HCT116 (cell line): ENCODE measurements at regions of chr3 and their contacts with region 1.

Region 1: GRCh38 chr3:69451594-69451993 is 65.7 kb upstream of the FRMD4B start:
- DNase-seq: no peak
- ATAC-seq: 0 out of 2 replicates have a peak, but pooled peaks have one; percentile 55
- H3K4me3 ChIP-seq: no peak overlapping the region
- H3K27ac ChIP-seq: no peak overlapping the region
- H3K4me1 ChIP-seq: no peaks in the 10 kb centered on the region
- H3K27me3 ChIP-seq: no peaks in the 10 kb centered on the region
- CTCF ChIP-seq: peak in 2 of 3 experiments; percentile 11 to 35; a peak in 3 of 6 replicates
- POLR2A ChIP-seq: no peak
- RAD21 ChIP-seq: peak; percentile 12; the same call in 1 of the 2 replicates

Region 2: GRCh38 chr3:68653381-68653780 is 798.2 kb before region 1 on chr3:
- CTCF ChIA-PET with region 1: no interaction called
- POLR2A ChIA-PET with region 1: no interaction called
- RAD21 ChIA-PET with region 1: no interaction called
- intact Hi-C with region 1: no loop called
- DNase-seq: no peak
- ATAC-seq: no peak
- H3K4me3 ChIP-seq: no peak overlapping the region
- H3K27ac ChIP-seq: no peak overlapping the region
- H3K4me1 ChIP-seq: no peaks in the 10 kb centered on the region
- H3K27me3 ChIP-seq: no peaks in the 10 kb centered on the region
- CTCF ChIP-seq: no peak
- POLR2A ChIP-seq: no peak
- RAD21 ChIP-seq: no peak

Region 3: DNA sequence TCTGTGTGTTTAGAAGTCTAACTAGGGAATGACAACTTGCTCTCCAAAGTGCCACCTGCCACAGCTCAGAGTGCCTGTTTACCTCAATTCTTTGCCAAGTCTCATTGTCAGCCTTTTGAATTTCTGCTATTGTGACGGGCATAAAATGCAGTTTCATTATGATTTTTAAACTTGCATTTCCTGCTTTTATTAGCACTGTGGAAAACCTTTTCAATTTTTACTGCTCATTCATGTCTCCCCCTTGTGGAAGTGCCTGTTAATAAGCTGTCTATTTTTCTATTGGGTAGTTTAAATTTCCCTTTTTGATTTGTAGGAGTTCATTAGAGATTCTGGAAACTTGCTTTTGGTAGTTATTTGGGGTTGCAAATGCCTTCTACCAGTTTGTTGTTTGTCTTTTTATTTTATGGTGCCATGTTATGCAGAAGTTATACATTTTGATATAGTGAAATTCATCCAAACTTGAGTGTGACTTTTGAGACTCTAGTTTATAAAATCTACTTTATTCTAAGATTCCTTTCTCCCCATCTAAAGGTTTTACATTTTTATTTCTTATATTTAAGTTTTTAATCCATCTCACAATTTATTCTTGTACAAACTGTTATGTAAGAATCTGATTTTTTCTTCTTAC is 11.8 kb before region 1 on chr3:
- CTCF ChIA-PET with region 1: interaction called, 10 read pairs
- POLR2A ChIA-PET with region 1: no interaction called
- RAD21 ChIA-PET with region 1: no interaction called
- intact Hi-C with region 1: no loop called
- DNase-seq: peak; percentile 16
- ATAC-seq: no peak
- H3K4me3 ChIP-seq: no peak overlapping the region
- H3K27ac ChIP-seq: no peak overlapping the region
- H3K4me1 ChIP-seq: no peaks in the 10 kb centered on the region
- H3K27me3 ChIP-seq: no peaks in the 10 kb centered on the region
- CTCF ChIP-seq: peak; percentile 37 to 75 (median 66); a peak in 5 of 6 replicates
- POLR2A ChIP-seq: no peak
- RAD21 ChIP-seq: peak; percentile 44

Region 4: GRCh38 chr3:69665026-69665737 is 213.6 kb after region 1 on chr3:
- CTCF ChIA-PET with region 1: no interaction called
- POLR2A ChIA-PET with region 1: no interaction called
- RAD21 ChIA-PET with region 1: no interaction called
- intact Hi-C with region 1: loop called (anchors 10 kb)
- DNase-seq: no peak
- ATAC-seq: no peak
- H3K4me3 ChIP-seq: no peak overlapping the region
- H3K27ac ChIP-seq: no peak overlapping the region
- H3K4me1 ChIP-seq: no peaks in the 10 kb centered on the region
- H3K27me3 ChIP-seq: peaks cover 3% of the 10 kb centered on the region; the same call in 1 of the 2 replicates
- CTCF ChIP-seq: no peak
- POLR2A ChIP-seq: no peak
- RAD21 ChIP-seq: no peak